KBM-7 (cell line): ENCODE measurements at regions of chr2 and their contacts with region 1.

Region 1: GRCh38 chr2:20962939-20963557 is 80.8 kb downstream of the APOB start:
- DNase-seq: peak; percentile 79

Region 2: GRCh38 chr2:20661067-20661980 is 301.7 kb before region 1 on chr2:
- in situ Hi-C with region 1: loop called (anchors 10 kb)
- DNase-seq: peak; percentile 86

Region 3: GRCh38 chr2:21103274-21103891 is 140.3 kb after region 1 on chr2:
- in situ Hi-C with region 1: no loop called
- DNase-seq: no peak